PC-9 (cell line): ENCODE measurements at regions of chr13 and their contacts with region 1.

Region 1: DNA sequence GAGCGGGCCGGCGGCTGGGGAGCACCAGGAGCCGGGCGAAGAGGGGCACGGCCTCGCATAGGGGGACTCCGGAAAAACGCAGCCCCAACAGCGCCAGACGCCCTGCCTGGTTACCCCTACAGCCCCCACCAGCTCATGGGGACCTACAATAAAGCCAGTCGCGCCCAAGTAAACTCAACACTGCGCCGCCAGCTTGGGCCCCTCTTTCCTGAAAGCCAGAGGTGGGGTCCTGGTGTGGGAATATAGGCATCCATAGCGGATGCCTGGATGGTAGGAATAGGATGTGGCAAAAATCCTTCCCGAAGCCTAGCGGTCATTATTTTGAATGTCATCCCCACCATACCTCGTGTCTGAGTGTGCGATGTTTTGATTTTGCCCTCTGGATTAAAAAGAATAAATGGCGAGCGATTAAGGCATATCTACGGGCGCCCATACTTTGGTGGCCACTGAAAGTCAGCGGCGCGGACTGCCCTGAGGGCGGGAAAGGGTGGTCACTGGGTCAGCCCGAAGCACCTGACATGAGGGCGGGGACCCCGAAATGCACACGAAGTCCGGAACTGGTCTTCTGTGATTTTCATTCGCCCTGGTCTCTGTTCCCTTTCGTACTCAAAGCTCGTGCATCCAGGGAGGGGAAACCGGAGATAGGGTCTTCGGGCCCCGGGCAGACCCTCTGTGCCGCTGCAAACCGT is at the starts of genes NHLRC3 and PROSER1:
- DNase-seq: peak; percentile 81 to 88
- H3K4me3 ChIP-seq: peak within 1 kb of the TSS; percentile 90
- H3K27ac ChIP-seq: peak within 1 kb of the TSS; percentile 41
- H3K4me1 ChIP-seq: peaks cover 21% of the 10 kb centered on the region
- H3K27me3 ChIP-seq: no peaks in the 10 kb centered on the region
- CTCF ChIP-seq: no peak
- total RNA-seq, gene NHLRC3: 19.6 and 25.6 TPM in 2 replicates
- total RNA-seq, gene PROSER1: 30.1 and 32.3 TPM in 2 replicates

Region 2: DNA sequence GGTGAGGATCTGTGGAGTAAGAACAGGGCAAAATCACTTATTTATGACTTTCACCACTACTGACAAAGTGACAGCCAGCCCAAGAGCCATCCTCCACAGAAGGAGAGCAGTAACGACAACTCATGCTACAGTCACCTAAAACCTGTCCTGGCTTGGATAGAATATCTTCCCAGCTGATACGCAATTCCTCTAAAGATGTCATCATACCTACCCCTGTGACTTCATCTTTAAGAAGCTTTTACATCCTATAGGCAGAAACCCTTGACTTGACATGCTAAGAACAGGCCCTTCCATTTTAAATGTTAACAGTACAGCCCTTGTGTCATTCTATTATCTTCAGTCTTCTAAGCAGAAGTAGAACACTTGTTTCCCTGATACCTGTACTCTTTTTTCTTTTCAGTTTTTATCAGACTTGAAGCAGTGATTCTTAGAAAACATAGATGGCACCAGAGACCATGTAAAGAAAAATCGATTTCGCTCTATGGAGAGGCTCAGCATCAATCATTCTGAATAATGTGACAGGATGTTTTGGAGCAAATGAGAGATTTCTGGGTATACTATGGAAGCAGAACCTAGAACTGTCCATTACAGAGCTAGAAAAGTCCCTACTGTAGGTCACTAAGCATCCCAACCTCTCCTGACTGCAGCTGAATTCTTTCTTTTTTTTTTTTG is 67.5 kb before region 1 on chr13:
- CTCF ChIA-PET with region 1: no interaction called
- POLR2A ChIA-PET with region 1: no interaction called
- intact Hi-C with region 1: no loop called
- DNase-seq: no peak
- H3K4me3 ChIP-seq: no peak overlapping the region
- H3K27ac ChIP-seq: no peak overlapping the region
- H3K4me1 ChIP-seq: no peaks in the 10 kb centered on the region
- H3K27me3 ChIP-seq: no peaks in the 10 kb centered on the region
- CTCF ChIP-seq: peak; percentile 36

Region 3: GRCh38 chr13:39072842-39073241 is 34.8 kb after region 1 on chr13:
- CTCF ChIA-PET with region 1: no interaction called
- POLR2A ChIA-PET with region 1: no interaction called
- intact Hi-C with region 1: no loop called
- DNase-seq: no peak
- H3K4me3 ChIP-seq: no peak overlapping the region
- H3K27ac ChIP-seq: no peak overlapping the region
- H3K4me1 ChIP-seq: no peaks in the 10 kb centered on the region
- H3K27me3 ChIP-seq: no peaks in the 10 kb centered on the region
- CTCF ChIP-seq: no peak

Region 4: GRCh38 chr13:39602614-39603366 is 564.8 kb after region 1 on chr13 and contains the start of gene LHFPL6:
- CTCF ChIA-PET with region 1: no interaction called
- POLR2A ChIA-PET with region 1: no interaction called
- intact Hi-C with region 1: loop called (anchors 5 kb)
- DNase-seq: peak; percentile 40 to 67
- H3K4me3 ChIP-seq: peak within 1 kb of the TSS; percentile 70
- H3K27ac ChIP-seq: no peak within 1 kb of the TSS
- H3K4me1 ChIP-seq: peaks cover 6% of the 10 kb centered on the region; the same call in 1 of the 2 replicates
- H3K27me3 ChIP-seq: no peaks in the 10 kb centered on the region
- CTCF ChIP-seq: peak; percentile 54; the same call in 1 of the 2 replicates
- total RNA-seq, gene LHFPL6: 2.5 and 3.1 TPM in 2 replicates

Region 5: DNA sequence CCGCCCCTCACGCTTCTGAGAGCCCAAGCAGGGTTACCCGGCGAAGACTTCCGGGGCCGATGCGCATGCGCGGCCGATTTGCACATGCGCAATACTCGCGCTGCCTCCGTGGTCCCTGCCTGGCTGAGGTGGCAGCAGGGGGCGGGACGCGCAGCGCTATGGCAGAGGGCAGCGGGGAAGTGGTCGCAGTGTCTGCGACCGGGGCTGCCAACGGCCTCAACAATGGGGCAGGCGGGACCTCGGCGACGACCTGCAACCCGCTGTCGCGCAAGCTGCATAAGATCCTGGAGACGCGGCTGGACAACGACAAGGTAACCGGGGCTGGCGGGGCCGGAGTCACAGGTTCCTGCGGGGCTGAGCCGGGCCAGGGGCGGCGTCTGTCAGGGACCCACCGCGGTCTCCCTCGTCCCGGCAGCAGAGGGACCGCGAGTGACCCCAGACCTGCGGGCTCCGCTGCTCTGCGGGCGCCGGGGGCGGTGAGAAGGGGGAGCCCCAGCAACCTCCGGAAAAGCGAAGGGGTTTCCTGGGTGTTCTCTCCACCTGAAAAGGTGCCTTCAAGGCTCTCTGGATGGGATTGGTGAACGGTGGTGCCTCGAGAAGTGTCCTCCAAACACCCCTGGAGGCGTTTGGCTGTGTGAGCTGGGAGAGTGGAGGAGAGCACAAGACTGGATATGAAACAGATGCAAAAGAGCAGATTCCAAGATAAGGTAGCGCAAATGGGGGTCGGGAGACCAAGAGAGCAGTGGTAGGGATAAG is 617.7 kb after region 1 on chr13 and contains the start of gene COG6:
- CTCF ChIA-PET with region 1: no interaction called
- POLR2A ChIA-PET with region 1: no interaction called
- intact Hi-C with region 1: loop called (anchors 5 kb)
- DNase-seq: peak; percentile 78 to 90
- H3K4me3 ChIP-seq: peak within 1 kb of the TSS; percentile 86
- H3K27ac ChIP-seq: no peak within 1 kb of the TSS
- H3K4me1 ChIP-seq: peaks cover 4% of the 10 kb centered on the region; the same call in 1 of the 2 replicates
- H3K27me3 ChIP-seq: no peaks in the 10 kb centered on the region
- CTCF ChIP-seq: no peak
- total RNA-seq, gene COG6: 23.7 and 24.3 TPM in 2 replicates